PC-3 (cell line): ENCODE measurements at regions of chr1 and their contacts with region 1.

Region 1: DNA sequence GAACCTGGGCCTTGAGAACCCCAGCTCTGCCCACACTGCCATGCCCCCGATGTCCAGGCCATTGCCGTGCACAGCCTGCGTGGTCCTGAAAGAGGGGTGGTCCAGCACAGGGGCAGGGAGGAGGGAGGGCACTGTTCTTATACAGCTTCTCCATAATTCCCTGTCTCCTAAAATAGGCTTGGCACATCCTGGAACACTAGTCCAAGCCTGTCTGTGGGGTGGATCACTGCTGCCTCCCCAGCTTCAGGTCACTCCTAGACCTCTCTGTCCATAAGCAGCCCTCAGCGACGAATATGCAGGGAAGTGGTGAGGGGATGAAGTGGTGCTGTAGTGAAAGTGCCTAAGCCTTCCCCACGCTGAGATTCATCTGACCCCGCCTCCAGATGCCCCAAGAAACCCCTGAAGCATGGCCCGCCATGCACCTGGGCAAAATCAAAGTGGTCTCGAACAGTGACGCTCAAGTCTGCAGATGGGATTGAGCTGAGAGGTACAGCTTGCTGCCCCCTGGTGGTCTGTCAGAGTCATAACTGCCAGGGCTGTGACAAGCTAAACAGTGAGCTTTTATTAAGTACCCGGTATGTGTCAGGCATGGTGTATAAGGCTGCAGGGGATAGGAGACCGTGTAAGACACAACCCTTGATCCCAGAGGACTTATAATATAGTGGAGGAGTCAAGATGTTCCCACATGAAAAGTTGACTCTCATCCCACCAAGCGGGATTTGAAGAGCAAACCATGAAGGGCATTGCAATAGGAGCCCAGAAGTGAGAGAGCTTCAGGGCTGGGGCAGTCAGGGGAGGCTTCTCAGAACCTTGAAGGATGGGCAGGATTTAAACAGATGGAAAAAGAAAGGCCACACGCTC is 66.6 kb downstream of the FAM163A start:
- DNase-seq: peak; percentile 66
- ATAC-seq: peak; percentile 65
- H3K4me3 ChIP-seq: no peak overlapping the region
- H3K27ac ChIP-seq: no peak overlapping the region
- H3K4me1 ChIP-seq: no peaks in the 10 kb centered on the region
- H3K27me3 ChIP-seq: peaks cover 17% of the 10 kb centered on the region
- CTCF ChIP-seq: peak; percentile 80

Region 2: DNA sequence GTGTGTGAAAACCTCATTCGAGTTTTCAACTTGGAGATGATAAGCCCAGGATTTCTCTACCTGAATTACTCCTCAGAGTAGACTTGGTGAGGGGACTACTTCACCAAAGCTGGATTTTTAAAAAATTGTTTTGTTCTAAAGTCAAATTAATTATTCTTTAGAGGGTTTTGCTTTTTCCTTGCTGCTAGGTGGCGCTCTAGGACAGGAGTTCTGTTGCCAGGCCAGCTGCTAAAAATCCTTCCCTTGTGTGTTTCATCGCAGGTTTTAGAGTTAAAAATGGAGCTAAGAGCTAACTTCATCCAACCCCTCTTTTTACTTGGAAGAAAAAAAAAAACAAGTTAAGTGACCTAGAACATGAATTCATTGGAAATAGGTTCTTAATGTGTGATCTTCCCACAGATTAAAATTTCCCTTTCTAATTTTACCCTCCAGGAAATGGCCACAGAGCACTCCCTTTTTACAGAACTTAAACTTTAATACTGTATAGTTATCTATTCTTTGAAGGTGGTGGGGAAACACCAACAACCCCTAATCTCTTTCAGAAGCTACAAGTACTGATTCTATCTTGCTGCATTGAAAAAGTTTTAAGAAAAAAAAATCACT is 103.3 kb before region 1 on chr1:
- CTCF ChIA-PET with region 1: interaction called, 76 read pairs
- POLR2A ChIA-PET with region 1: interaction called, 3 read pairs
- intact Hi-C with region 1: loop called (anchors 1 kb)
- DNase-seq: peak; percentile 54
- ATAC-seq: no peak
- H3K4me3 ChIP-seq: no peak overlapping the region
- H3K27ac ChIP-seq: no peak overlapping the region
- H3K4me1 ChIP-seq: no peaks in the 10 kb centered on the region
- H3K27me3 ChIP-seq: no peaks in the 10 kb centered on the region
- CTCF ChIP-seq: peak; percentile 86

Region 3: DNA sequence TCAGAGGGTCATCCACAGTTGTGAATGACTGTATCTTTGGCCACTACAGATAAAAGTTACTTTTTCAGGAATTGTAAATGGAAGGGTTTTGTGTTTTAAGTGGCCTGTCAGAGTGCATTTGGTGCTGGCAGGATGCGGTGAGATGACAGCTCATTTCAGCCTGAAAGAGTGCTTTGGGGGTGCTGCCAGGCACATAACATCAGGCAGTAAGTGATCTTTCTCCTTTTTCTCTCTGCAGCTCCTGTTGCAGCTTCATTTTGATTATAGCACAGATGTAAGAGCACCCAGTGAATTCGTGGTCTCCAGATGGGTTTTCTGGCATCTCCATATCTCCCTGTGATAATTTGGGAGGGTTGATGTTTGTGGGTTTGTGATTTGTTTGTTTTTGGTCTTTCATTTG is 81.5 kb before region 1 on chr1:
- CTCF ChIA-PET with region 1: no interaction called
- POLR2A ChIA-PET with region 1: no interaction called
- intact Hi-C with region 1: no loop called
- DNase-seq: peak; percentile 26
- ATAC-seq: no peak
- H3K4me3 ChIP-seq: no peak overlapping the region
- H3K27ac ChIP-seq: no peak overlapping the region
- H3K4me1 ChIP-seq: peaks cover 22% of the 10 kb centered on the region
- H3K27me3 ChIP-seq: no peaks in the 10 kb centered on the region
- CTCF ChIP-seq: no peak

Region 4: DNA sequence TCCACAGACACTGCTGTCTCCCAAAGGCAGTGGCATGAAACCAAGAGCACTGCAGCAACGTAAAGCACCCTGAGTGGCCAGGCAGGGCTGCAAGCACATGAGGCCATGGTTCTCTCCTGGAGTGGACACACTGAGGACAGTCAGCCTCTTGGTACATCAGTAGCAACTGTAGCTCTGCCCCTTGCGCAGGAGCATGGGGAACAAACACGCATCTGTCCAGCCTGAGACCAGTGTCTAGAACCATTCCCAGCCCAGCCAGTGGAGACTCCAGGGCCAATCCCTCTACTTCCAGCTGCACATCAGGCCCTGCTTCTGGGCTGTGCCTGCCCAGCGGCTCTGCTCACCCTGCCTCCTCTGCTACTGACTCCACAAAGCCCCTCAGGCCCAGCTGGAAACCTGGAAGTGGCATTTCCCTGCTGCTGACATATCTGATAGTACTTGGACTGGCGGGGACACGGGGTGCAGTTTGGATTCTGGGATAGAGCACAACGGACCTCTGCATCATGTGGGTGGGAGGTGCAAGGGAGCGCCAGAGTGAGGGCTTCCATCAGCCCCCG is 18.9 kb after region 1 on chr1:
- CTCF ChIA-PET with region 1: interaction called, 9 read pairs
- POLR2A ChIA-PET with region 1: interaction called, 10 read pairs
- intact Hi-C with region 1: no loop called
- DNase-seq: no peak
- ATAC-seq: no peak
- H3K4me3 ChIP-seq: no peak overlapping the region
- H3K27ac ChIP-seq: no peak overlapping the region
- H3K4me1 ChIP-seq: 0 out of 2 replicates have a peak, but pooled peaks cover 3% of the 10 kb centered on the region
- H3K27me3 ChIP-seq: no peaks in the 10 kb centered on the region
- CTCF ChIP-seq: no peak

Region 5: DNA sequence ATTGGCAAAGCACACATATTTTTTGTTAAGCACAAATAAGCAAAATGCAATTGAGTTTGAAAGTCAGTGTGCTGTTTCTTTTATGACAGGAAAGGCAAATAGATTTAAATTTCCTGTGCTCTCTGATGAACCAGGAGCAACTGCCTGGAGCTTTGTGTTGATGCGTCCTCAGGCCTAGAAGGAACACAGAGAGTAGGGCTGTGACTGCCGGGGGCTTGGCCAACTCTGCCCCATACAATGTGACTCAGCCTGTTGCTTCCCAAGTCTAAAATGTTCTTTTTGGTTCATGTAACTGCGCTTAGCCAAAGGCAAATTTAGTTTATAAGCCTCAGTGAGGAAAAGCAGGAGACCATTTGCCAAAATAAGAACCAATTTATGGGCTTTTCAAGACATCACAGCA is 30.4 kb after region 1 on chr1:
- CTCF ChIA-PET with region 1: interaction called, 13 read pairs
- POLR2A ChIA-PET with region 1: interaction called, 7 read pairs
- intact Hi-C with region 1: no loop called
- DNase-seq: no peak
- ATAC-seq: peak; percentile 97
- H3K4me3 ChIP-seq: no peak overlapping the region
- H3K27ac ChIP-seq: no peak overlapping the region
- H3K4me1 ChIP-seq: no peaks in the 10 kb centered on the region
- H3K27me3 ChIP-seq: no peaks in the 10 kb centered on the region
- CTCF ChIP-seq: no peak

Region 6: GRCh38 chr1:179882243-179883039 is 72.7 kb after region 1 on chr1 and contains the start of gene TOR1AIP1:
- CTCF ChIA-PET with region 1: no interaction called
- POLR2A ChIA-PET with region 1: interaction called, 13 read pairs
- intact Hi-C with region 1: no loop called
- DNase-seq: peak; percentile 93
- ATAC-seq: peak; percentile 75
- H3K4me3 ChIP-seq: peak within 1 kb of the TSS; percentile 99
- H3K27ac ChIP-seq: peak within 1 kb of the TSS; percentile 96
- H3K4me1 ChIP-seq: peaks cover 11% of the 10 kb centered on the region; the same call in 1 of the 2 replicates
- H3K27me3 ChIP-seq: no peaks in the 10 kb centered on the region
- CTCF ChIP-seq: no peak
- total RNA-seq, gene TOR1AIP1: 14.8 and 21.3 TPM in 2 replicates

Region 7: DNA sequence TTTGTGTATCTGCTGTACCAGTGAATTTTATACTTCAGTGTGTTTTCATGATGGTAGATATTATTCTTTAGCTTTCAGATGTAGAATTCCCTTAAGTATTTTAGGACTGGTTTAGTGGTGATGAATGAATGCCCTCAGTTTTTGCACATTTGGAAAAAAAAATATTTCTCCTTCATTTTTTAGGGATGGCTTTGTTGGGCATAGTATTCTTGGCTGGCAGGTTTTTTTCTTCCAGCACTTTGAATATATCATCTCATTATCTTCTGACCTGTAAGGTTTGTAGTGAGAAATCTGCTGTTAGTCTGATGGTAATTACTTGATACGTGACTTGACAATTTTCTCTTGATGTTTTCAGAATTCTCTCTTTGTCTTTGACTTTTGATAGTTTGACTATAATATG is 888.8 kb after region 1 on chr1:
- CTCF ChIA-PET with region 1: no interaction called
- POLR2A ChIA-PET with region 1: no interaction called
- intact Hi-C with region 1: no loop called
- DNase-seq: no peak
- ATAC-seq: no peak
- H3K4me3 ChIP-seq: no peak overlapping the region
- H3K27ac ChIP-seq: no peak overlapping the region
- H3K4me1 ChIP-seq: no peaks in the 10 kb centered on the region
- H3K27me3 ChIP-seq: no peaks in the 10 kb centered on the region
- CTCF ChIP-seq: no peak